PC-3 (cell line): ENCODE measurements at regions of chr5 and their contacts with region 1.

Region 1: DNA sequence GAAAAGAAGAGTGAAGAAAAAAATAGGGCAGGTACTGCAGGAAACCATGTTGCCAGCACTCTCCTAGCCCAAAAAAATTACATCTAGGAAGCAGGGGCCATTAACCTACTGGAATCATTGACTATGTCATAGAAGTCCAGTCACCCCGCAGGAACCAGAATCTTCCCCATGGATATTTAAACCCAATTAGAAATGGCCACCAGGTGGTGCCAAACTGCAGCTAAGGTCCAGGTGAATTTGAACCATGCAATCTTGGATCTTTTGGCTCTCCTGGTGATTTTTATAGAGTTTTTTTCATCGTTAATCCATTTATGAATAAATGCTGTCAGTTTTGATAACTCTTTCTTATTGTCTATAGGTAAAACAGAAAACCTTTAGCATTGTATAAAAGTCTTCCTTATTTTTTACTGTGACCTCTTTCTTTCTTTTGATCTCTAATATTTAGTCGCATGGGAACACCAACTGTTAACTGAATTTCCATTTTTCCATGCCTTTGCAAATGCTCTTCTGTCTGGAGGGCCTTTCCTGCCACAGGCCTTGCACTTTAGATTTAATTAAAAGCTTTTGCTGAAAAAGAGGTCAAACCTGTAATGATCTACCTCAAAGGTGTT is 147.5 kb upstream of the FGF10 start:
- DNase-seq: peak; percentile 78
- ATAC-seq: peak; percentile 46; the same call in 1 of the 2 replicates
- H3K4me3 ChIP-seq: no peak overlapping the region
- H3K27ac ChIP-seq: no peak overlapping the region
- H3K4me1 ChIP-seq: no peaks in the 10 kb centered on the region
- H3K27me3 ChIP-seq: peaks cover 31% of the 10 kb centered on the region
- CTCF ChIP-seq: peak; percentile 95

Region 2: DNA sequence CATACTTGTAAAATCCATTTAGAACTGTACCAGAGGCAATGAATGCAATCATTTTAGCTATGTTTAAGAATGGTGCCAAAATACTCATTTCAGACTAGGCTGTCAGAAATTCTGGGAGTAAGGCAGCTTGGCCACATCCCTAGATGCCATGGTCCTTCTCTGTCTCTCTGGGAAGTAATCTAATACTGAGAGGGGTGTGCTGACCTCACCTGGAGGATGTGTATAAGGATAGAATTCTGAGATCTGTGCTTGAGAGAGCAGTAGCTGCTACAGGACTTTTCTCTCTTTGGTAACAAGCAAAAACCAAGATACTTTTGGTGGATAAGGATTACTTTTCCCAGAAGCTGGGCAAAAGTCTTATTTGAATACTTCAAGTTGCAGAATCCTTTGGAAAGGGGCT is 203.9 kb after region 1 on chr5:
- CTCF ChIA-PET with region 1: no interaction called
- POLR2A ChIA-PET with region 1: no interaction called
- intact Hi-C with region 1: loop called (anchors 1 kb)
- DNase-seq: peak; percentile 32
- ATAC-seq: peak; percentile 35; the same call in 1 of the 2 replicates
- H3K4me3 ChIP-seq: no peak overlapping the region
- H3K27ac ChIP-seq: no peak overlapping the region
- H3K4me1 ChIP-seq: no peaks in the 10 kb centered on the region
- H3K27me3 ChIP-seq: peaks cover 32% of the 10 kb centered on the region
- CTCF ChIP-seq: no peak; the same call in 1 of the 2 replicates

Region 3: GRCh38 chr5:44774279-44774880 is 237.6 kb after region 1 on chr5:
- CTCF ChIA-PET with region 1: no interaction called
- POLR2A ChIA-PET with region 1: no interaction called
- intact Hi-C with region 1: loop called (anchors 1 kb)
- DNase-seq: peak; percentile 81
- ATAC-seq: peak; percentile 64
- H3K4me3 ChIP-seq: no peak overlapping the region
- H3K27ac ChIP-seq: no peak overlapping the region
- H3K4me1 ChIP-seq: no peaks in the 10 kb centered on the region
- H3K27me3 ChIP-seq: peaks cover 31% of the 10 kb centered on the region
- CTCF ChIP-seq: peak; percentile 76